Naive thymus-derived CD8-positive, alpha-beta T cell (primary cell): ENCODE measurements at regions of chr6 and their contacts with region 1.

Region 1: GRCh38 chr6:42928986-42929820 is at the start of gene CNPY3:
- DNase-seq: peak; percentile 87 to 97 (median 94)
- ATAC-seq: peak; percentile 82
- H3K4me3 Mint-ChIP-seq: peak within 1 kb of the TSS; percentile 92 to 100 (median 96)
- H3K27ac Mint-ChIP-seq: peak within 1 kb of the TSS; percentile 97 to 100 (median 99)
- H3K4me1 Mint-ChIP-seq: peaks cover 32 to 59% (median 55%) of the 10 kb centered on the region in 4 donors
- H3K27me3 Mint-ChIP-seq: no peaks in the 10 kb centered on the region
- polyA plus RNA-seq, gene CNPY3: 90.3 to 158 (median 124) TPM

Region 2: GRCh38 chr6:42745707-42746462 is 183.3 kb before region 1 on chr6 and contains the start of gene TBCC:
- POLR2A ChIA-PET with region 1: interaction called, 19 read pairs
- DNase-seq: peak; percentile 81 to 98 (median 94)
- ATAC-seq: peak; percentile 70 to 75
- H3K4me3 Mint-ChIP-seq: peak within 1 kb of the TSS; percentile 90 to 100 (median 100)
- H3K27ac Mint-ChIP-seq: peak within 1 kb of the TSS; percentile 99 to 100 (median 100)
- H3K4me1 Mint-ChIP-seq: peaks cover 14 to 45% (median 36%) of the 10 kb centered on the region in 4 donors
- H3K27me3 Mint-ChIP-seq: no peaks in the 10 kb centered on the region
- polyA plus RNA-seq, gene TBCC: 112 to 126 (median 125) TPM

Region 3: DNA sequence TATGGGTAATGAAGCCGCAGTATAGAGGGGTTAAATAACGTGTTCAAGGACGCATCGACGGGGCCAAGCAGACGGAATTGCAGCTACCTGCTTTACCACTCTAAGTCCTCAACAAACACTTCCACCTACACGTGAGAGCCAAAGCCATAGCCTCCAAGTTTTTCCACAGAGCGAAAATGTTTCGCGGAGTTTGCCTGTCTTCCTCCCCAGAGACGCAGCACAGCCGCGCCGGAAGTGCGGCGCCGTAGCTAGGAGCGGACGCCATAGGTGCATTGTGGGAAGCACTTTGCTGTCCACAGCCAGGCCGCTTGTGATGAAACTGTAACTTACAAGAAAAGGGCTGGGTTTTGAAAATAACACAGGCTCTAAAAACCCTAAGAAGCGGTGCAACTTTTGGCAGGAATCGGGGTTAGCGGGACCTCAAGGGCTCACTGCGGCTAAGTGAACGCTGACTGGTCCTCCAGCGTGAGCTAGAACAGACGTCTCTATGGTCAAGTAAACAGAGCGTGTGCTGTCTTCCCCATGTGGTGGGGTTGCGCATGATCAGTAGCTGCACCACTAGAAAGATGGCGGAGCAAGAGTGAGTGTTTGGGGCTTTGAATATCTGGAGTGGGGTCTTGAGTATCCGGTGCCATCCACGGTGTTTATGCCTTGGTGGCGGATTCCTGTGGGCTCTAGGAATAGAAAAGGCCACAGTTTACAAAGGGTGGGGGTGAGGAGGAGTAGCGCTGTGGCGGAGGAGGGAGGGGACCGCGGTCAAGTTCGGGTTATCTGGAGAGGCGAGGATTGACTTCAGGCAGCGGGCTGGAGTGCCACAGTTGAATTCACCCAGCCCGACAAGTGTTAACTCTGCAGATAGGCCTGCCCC is 49.6 kb before region 1 on chr6 and contains the start of gene RPL7L1:
- POLR2A ChIA-PET with region 1: interaction called, 29 read pairs
- DNase-seq: peak; percentile 67 to 93 (median 83)
- ATAC-seq: peak; percentile 92 to 93
- H3K4me3 Mint-ChIP-seq: peak within 1 kb of the TSS; percentile 92 to 100 (median 97)
- H3K27ac Mint-ChIP-seq: peak within 1 kb of the TSS; percentile 98 to 100 (median 100)
- H3K4me1 Mint-ChIP-seq: peaks cover 9 to 37% (median 35%) of the 10 kb centered on the region in 4 donors
- H3K27me3 Mint-ChIP-seq: no peaks in the 10 kb centered on the region
- polyA plus RNA-seq, gene RPL7L1: 65.3 to 87.9 (median 67.4) TPM

Region 4: GRCh38 chr6:42978839-42979522 is 49.8 kb after region 1 on chr6 and contains the start of gene PEX6:
- POLR2A ChIA-PET with region 1: interaction called, 144 read pairs
- DNase-seq: peak; percentile 83 to 99 (median 93)
- ATAC-seq: peak; percentile 91 to 93
- H3K4me3 Mint-ChIP-seq: peak within 1 kb of the TSS; percentile 85 to 97 (median 94)
- H3K27ac Mint-ChIP-seq: peak within 1 kb of the TSS; percentile 96 to 100 (median 98)
- H3K4me1 Mint-ChIP-seq: peaks cover 16 to 59% (median 48%) of the 10 kb centered on the region in 4 donors
- H3K27me3 Mint-ChIP-seq: no peaks in the 10 kb centered on the region
- polyA plus RNA-seq, gene PEX6: 17.6 to 30.8 (median 23.6) TPM

Region 5: DNA sequence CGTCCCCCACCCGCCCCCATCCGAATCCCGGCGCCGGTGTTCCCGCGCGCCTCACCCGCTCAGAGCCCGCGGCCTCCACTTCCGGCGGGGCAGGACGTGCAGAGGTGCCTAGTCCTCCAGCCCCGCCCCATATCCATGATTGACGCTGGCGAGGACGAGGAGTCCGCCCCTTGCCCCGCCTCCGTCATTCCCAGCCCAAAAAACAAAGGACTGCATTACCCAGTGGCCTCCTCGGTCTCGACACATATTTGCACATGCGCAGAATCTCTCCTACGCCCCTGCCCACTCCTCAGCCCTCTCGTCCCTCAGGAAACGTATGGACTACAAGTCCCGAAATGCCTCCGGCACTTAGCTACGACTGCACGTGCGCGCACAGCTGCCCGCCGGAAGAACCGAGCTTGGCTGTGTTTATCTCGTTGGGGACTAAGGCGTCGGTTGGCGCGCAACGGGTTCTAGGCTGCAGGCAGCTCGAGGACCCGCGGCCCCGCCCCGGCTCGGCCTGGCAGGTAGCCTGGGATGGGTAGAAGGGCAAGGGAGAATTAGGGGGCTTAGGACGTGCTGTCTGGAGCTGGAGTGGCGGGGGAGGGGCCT is 84.7 kb after region 1 on chr6 and contains the starts of genes KLHDC3 and MEA1:
- POLR2A ChIA-PET with region 1: interaction called, 109 read pairs
- DNase-seq: peak; percentile 93 to 100 (median 99)
- ATAC-seq: peak; percentile 92
- H3K4me3 Mint-ChIP-seq: peak within 1 kb of the TSS; percentile 89 to 97 (median 94)
- H3K27ac Mint-ChIP-seq: peak within 1 kb of the TSS; percentile 82 to 98 (median 95)
- H3K4me1 Mint-ChIP-seq: peaks cover 52 to 82% (median 68%) of the 10 kb centered on the region in 4 donors
- H3K27me3 Mint-ChIP-seq: no peaks in the 10 kb centered on the region
- polyA plus RNA-seq, gene KLHDC3: 107 to 136 (median 117) TPM
- polyA plus RNA-seq, gene MEA1: 73.4 to 90.9 (median 77.5) TPM

Region 6: GRCh38 chr6:43059168-43060033 is 130.2 kb after region 1 on chr6 and contains the starts of genes KLC4 and MRPL2:
- POLR2A ChIA-PET with region 1: interaction called, 34 read pairs
- DNase-seq: peak; percentile 91 to 98 (median 96)
- ATAC-seq: peak; percentile 94 to 98
- H3K4me3 Mint-ChIP-seq: peak within 1 kb of the TSS; percentile 93 to 99 (median 95)
- H3K27ac Mint-ChIP-seq: peak within 1 kb of the TSS; percentile 96 to 100 (median 99)
- H3K4me1 Mint-ChIP-seq: peaks cover 17 to 49% (median 40%) of the 10 kb centered on the region in 4 donors
- H3K27me3 Mint-ChIP-seq: no peaks in the 10 kb centered on the region
- polyA plus RNA-seq, gene KLC4: 9.9 to 12.7 (median 10.9) TPM
- polyA plus RNA-seq, gene MRPL2: 40.7 to 69.9 (median 59.5) TPM